Endothelial cell of umbilical vein (primary cell): ENCODE measurements at regions of chr2 and their contacts with region 1.

Region 1: GRCh38 chr2:148687543-148687942 is 43.0 kb downstream of the EPC2 start:
- DNase-seq: no peak
- H3K4me3 ChIP-seq: no peak overlapping the region
- H3K27ac ChIP-seq: no peak overlapping the region
- H3K4me1 ChIP-seq: no peaks in the 10 kb centered on the region
- H3K27me3 ChIP-seq: no peaks in the 10 kb centered on the region
- CTCF ChIP-seq: no peak
- POLR2A ChIP-seq: no peak

Region 2: DNA sequence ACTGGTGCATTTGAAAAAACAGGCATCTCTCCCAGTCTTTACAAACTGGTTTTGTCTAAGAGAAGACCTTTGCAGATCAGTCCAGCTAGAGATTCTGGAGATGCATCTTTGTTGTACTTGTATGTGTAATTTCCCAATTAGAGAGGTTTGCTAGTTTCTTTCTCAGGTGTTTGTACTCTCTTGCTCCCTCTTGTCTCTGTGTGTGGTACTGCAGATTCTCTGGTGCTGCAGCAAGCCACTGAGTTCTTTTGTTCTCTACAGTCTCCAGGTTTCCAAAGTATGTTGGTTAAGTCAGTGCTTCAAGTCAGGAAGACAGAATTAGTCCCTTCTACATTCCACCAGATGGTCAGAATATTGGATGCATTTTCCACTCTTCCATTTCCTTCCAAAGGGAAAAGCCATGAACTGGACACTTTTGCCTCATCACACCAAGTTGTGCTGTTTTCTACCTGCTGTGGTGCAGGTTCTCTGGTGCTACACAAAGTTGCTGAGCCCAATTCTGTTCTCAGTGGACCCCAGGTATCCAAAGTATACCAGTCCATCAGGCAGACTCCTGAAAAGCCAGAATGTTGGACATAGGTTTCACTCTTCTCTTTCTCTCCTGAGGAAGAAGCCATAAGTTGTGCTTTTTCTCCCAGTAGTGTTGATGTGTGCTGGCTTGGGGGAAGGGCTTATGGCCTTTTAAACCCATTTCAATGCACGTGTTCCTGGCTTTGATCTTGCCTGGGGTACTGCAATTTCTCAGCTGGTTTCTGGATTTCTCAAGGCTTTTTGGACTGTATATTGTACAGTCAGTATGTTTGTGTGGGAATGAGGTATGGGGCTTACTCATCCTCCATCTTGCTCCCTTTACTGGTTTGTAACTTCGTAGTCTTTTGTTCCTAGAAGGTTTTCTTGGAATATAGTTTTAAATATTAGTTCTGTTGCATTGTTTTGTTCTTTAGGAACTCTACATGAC is 13.2 kb before region 1 on chr2:
- CTCF ChIA-PET with region 1: interaction called, 10 read pairs
- POLR2A ChIA-PET with region 1: no interaction called
- dilution Hi-C with region 1: no loop called
- intact Hi-C with region 1: no loop called
- DNase-seq: peak; percentile 29
- H3K4me3 ChIP-seq: no peak overlapping the region
- H3K27ac ChIP-seq: no peak overlapping the region
- H3K4me1 ChIP-seq: peaks cover 11% of the 10 kb centered on the region
- H3K27me3 ChIP-seq: no peaks in the 10 kb centered on the region
- CTCF ChIP-seq: peak; percentile 41 to 59
- POLR2A ChIP-seq: no peak